Naive thymus-derived CD8-positive, alpha-beta T cell (primary cell): ENCODE measurements at regions of chr1 and their contacts with region 1.

Region 1: DNA sequence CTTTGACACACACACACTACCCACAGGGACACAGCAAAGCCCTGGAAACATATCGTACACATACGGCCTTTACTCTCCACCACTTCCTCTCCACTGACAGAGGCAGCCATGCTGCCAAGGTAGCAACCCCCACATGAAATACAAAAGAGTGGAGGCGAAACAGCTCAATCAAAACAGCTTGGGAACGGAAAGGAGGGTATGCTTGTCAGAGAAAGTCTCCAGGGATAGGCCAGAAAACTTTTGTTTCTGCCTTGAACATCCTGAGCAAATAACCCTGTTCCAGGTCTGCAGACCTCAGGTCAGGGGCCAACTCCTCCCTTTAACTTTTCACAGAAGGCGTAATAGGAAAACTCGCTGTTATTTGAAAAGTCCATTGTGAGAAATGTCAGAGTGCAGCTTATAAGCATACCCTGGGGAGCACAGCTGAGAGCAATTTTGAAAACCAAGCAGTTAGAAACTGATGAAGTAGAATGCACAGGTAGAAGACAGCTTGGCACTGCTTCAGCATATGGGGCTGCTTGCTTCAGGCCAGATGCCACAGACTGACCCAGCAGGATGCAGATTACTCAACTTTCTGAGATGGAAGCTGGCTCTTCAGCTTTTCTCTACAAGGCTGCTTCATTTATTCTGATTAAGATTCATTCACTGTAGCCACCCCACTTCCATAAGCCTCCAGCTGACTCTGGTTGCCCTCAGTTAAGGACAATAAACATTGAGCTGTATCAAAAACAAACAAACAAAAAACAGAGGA is 18.0 kb downstream of the KIAA0319L start:
- DNase-seq: peak in 8 of 10 donors; percentile 22 to 88 (median 70)
- ATAC-seq: peak; percentile 97 to 98
- H3K4me3 Mint-ChIP-seq: peak overlapping the region; percentile 54 to 85 (median 79)
- H3K27ac Mint-ChIP-seq: peak overlapping the region; percentile 84 to 98 (median 96)
- H3K4me1 Mint-ChIP-seq: peaks cover 48 to 89% (median 87%) of the 10 kb centered on the region in 4 donors
- H3K27me3 Mint-ChIP-seq: no peaks in the 10 kb centered on the region

Region 2: DNA sequence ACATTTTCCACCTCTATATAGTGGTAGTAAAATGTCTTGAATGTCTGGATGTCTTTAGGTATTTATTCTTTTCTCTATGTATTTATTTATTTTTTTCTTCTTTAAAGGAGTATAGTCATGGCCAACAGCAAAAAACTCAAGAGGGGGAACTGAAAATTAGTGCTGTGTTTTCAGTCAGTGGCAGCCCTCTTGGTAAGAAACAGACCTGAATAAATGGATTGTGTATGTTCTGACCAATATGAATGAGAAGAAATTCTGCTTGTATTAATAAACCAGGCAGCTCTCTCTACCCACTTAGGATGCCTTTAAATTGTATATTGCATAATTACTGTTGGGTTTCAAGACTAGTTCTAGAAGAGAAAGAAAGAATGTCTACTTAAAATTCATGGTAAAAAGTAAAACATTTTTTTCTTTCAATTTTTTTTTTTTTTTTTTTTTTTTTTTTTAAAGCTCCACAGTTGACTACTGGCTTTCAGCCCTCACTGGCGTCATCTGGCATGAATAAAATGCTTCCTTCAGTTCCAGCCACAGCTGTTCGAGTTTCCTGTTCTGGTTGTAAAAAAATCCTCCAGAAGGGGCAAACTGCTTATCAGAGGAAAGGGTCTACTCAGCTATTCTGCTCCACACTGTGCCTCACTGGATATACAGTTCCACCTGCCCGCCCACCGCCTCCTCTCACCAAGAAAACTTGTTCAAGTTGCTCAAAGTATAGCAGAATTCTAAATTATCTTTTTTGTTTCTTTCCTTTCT is 169.2 kb before region 1 on chr1:
- POLR2A ChIA-PET with region 1: no interaction called
- DNase-seq: no peak
- ATAC-seq: no peak
- H3K4me3 Mint-ChIP-seq: no peak overlapping the region
- H3K27ac Mint-ChIP-seq: peak overlapping the region in 2 of 10 donors; percentile 60 to 68
- H3K4me1 Mint-ChIP-seq: peaks cover 0 to 2% (median 0%) of the 10 kb centered on the region in 4 donors
- H3K27me3 Mint-ChIP-seq: no peaks in the 10 kb centered on the region

Region 3: DNA sequence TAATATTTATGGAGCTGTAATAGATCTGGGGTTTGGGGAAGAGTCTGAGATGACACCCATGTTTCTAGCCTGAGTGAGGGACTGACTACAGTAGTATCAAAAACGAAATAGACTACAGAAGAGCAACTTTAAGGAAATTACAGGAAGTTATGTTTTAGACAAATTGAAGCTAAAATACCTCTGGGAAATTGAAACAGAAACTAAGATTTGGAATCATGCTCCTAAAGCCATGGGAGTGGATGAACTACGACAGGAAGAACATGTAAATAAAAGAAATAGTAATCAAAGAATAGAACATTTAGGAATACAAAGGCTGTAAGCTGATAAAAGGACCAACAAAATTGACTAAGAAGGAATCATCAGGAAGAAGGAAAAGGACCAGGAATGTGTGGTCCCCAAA is 50.9 kb before region 1 on chr1:
- POLR2A ChIA-PET with region 1: no interaction called
- DNase-seq: no peak
- ATAC-seq: no peak
- H3K4me3 Mint-ChIP-seq: peak overlapping the region in 1 of 10 donors; percentile 34
- H3K27ac Mint-ChIP-seq: peak overlapping the region in 4 of 10 donors; percentile 15 to 57 (median 46)
- H3K4me1 Mint-ChIP-seq: peaks cover 11 to 19% (median 16%) of the 10 kb centered on the region in 4 donors
- H3K27me3 Mint-ChIP-seq: no peaks in the 10 kb centered on the region

Region 4: GRCh38 chr1:35505908-35506798 is 33.1 kb before region 1 on chr1:
- POLR2A ChIA-PET with region 1: interaction called, 11 read pairs
- DNase-seq: peak in 4 of 10 donors; percentile 8 to 68 (median 48)
- ATAC-seq: peak; percentile 72 to 80
- H3K4me3 Mint-ChIP-seq: peak overlapping the region; percentile 52 to 83 (median 75)
- H3K27ac Mint-ChIP-seq: peak overlapping the region; percentile 75 to 96 (median 92)
- H3K4me1 Mint-ChIP-seq: peaks cover 39 to 67% (median 64%) of the 10 kb centered on the region in 4 donors
- H3K27me3 Mint-ChIP-seq: no peaks in the 10 kb centered on the region

Region 5: GRCh38 chr1:35622510-35623178 is 83.4 kb after region 1 on chr1:
- POLR2A ChIA-PET with region 1: no interaction called
- DNase-seq: no peak
- ATAC-seq: no peak
- H3K4me3 Mint-ChIP-seq: no peak overlapping the region
- H3K27ac Mint-ChIP-seq: no peak overlapping the region
- H3K4me1 Mint-ChIP-seq: peaks cover 6 to 26% (median 13%) of the 10 kb centered on the region in 4 donors
- H3K27me3 Mint-ChIP-seq: no peaks in the 10 kb centered on the region